ENCODE measurements at regions of chr19 and their contacts with region 1.

Region 1: DNA sequence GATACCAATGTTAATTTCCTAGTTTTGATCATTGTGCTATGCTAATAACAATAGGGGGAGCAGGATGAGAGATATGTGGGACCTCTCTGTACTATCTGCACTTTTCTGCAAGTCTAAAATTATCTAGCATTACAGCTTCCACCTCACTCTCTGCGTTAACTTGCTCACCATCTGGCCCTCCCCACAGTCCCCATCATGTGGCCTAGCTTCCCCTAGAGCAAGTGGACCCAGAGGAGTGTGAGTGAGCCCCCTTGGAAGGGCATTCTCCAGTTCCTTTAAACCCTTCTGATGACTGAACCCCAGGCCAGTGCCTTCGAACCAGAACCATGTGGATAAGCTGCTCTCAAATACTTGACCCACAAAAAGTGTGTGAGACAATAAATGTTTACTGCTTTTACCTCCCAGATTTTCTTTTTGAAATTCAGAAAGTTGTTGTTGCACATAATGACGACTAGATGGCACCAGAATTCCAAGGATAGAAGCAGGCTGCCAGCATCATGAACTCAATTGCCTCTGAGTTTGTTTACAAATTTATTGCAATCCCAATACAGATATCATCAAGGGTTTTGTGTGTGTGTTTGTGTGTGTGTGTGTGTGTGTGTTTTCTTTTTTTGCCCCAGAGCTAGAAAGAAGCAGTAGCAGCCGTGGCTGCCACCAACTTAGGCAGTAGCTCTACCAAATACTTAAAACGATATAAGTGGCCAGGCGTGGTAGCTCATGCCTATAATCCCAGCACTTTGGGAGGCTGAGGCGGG is 49.0 kb upstream of the ZNF780A start:
- DNase-seq: no peak
- H3K4me3 ChIP-seq: no peak overlapping the region
- H3K27ac ChIP-seq: no peak overlapping the region
- H3K4me1 ChIP-seq: no peaks in the 10 kb centered on the region
- H3K27me3 ChIP-seq: peaks cover 7% of the 10 kb centered on the region
- CTCF ChIP-seq: peak; percentile 65 to 72 (median 66)
- EP300 ChIP-seq: no peak
- POLR2A ChIP-seq: no peak

Region 2: DNA sequence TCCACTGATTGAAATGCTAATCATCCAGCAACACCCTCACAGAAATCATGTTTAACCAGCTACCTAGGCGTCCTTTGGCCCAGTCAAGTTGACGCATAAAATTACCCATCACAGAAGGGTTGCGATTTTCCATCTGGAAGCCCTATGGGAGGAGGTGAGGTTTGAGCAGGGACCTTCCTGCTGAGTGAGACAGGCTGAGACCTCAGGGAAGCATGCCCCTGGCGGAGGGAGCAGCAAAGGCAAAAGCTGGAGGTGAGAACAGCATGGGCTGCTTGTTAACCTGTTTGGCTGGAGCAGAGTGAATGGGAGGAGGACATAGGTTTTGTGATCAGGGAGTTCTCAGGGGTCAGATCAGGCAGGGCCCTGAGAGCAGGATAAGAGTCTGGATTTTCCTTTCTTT is 71.2 kb after region 1 on chr19:
- in situ Hi-C with region 1: no loop called
- intact Hi-C with region 1: loop called (anchors 5 kb)
- DNase-seq: no peak
- H3K4me3 ChIP-seq: no peak overlapping the region
- H3K27ac ChIP-seq: no peak overlapping the region
- H3K4me1 ChIP-seq: no peaks in the 10 kb centered on the region
- H3K27me3 ChIP-seq: no peaks in the 10 kb centered on the region
- CTCF ChIP-seq: no peak
- EP300 ChIP-seq: no peak
- POLR2A ChIP-seq: no peak

Region 3: DNA sequence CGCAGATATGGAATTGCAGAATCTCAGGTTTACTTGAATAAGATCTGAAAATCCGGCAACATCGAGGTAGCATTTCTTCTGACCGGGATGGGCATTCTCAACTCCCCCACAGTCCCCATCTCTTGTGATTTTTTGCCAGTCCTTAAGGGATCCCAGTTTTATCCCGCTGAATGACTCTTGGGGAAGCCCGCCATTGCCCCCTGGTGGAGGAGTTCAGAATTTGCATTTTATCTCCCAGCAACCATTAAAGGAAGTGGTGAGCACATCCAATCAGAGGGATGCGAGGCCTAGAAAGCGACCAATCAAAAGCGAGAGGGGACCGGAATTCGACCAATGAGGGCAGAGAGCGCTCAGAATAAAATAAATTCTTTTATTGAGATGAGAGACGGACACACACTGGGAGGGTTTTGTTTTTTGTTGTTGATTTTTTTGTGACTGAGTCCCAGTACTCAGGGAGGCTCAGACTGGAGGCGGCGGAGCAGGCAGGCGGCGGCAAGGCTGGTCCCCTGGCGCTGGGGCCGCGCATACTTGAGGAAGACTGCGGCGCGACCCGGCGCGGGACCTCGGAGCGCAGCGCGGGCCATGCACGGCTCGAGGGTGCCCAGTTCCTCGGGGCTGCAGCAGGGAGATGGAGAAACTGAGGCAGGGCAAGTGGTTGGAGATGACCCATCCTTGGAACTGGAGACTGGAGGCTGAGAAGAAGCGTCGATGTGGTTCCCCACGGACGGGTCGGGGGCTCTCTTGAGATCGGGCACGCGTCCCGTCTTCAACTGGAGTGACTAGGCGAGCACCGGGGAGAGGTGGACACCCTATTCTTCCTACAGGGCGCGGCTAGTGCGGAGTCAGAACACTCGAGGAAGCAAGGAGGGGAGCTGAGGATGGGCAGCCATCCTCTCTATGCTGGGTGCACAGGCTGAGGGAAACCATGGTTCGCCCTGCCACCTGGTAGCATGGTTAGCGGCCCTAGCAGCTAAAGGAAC is 82.4 kb after region 1 on chr19:
- in situ Hi-C with region 1: loop called (anchors 5 to 10 kb)
- intact Hi-C with region 1: no loop called
- DNase-seq: peak; percentile 82
- H3K4me3 ChIP-seq: no peak overlapping the region
- H3K27ac ChIP-seq: no peak overlapping the region
- H3K4me1 ChIP-seq: peaks cover 7 to 29% (median 25%) of the 10 kb centered on the region in 4 donors
- H3K27me3 ChIP-seq: peaks cover 87% of the 10 kb centered on the region
- CTCF ChIP-seq: peak; percentile 87 to 96 (median 92)
- EP300 ChIP-seq: no peak
- POLR2A ChIP-seq: no peak